ENCODE measurements at regions of chr12 and their contacts with region 1.

Region 1: DNA sequence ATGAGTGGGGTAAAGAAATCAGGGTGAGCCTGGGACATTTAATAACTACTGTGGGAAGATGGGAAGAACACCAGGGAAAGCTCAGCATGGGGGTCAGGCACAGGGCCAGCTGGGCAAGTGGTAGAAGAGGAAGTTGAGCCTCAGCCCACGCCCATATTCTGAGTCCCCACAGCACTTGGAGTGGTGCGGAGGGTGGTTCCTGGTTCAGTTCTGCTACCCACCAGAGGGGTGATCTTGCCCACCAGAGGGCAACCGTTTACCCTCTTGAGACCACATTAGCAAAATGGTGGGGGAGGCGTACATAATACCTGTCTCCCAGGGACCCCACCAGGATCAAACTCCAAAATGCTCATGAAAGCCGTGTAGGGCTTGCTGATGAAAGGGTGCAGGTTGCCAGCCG is 16.8 kb upstream of the ANKRD33 start:
- DNase-seq: no peak
- H3K4me3 ChIP-seq: no peak overlapping the region
- H3K27ac ChIP-seq: no peak overlapping the region
- H3K4me1 ChIP-seq: peaks cover 6% of the 10 kb centered on the region
- H3K27me3 ChIP-seq: no peaks in the 10 kb centered on the region
- CTCF ChIP-seq: no peak
- POLR2A ChIP-seq: no peak

Region 2: DNA sequence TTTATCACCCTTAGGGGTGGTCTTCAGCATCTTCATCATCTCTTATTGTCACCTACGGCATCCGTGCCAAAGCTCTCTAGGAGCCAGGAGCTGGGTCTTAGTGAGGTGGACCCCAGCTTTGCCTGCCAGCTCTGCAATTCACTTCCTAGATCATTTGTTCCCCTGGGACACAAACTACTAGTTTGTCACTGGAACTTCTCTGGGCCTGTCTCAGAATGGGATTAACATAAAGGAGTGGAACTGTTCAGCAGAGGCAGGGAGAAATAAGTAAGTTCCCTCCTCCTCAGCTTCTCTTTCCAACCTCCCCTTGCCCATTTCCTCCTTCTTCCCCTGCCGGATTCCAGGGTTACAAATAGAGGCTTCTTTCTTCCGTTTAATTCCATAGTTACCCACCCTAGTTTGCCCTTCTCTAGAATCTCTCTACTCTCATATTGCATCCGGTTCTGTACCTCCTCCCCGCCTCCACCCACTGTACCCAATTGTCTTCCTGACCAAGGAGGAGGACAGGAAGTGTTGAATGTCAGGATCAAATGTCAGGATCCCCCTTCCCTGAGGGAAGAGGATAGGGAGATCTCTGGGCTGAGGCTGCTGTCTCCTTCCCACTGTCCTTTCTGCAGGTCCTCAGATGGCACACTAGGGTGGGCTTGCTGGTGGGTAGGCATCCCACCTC is 1445.4 kb before region 1 on chr12:
- CTCF ChIA-PET with region 1: no interaction called
- POLR2A ChIA-PET with region 1: no interaction called
- dilution Hi-C with region 1: no loop called
- intact Hi-C with region 1: no loop called
- DNase-seq: peak; percentile 5
- H3K4me3 ChIP-seq: no peak overlapping the region
- H3K27ac ChIP-seq: no peak overlapping the region
- H3K4me1 ChIP-seq: peaks cover 13% of the 10 kb centered on the region
- H3K27me3 ChIP-seq: no peaks in the 10 kb centered on the region
- CTCF ChIP-seq: no peak
- POLR2A ChIP-seq: no peak

Region 3: GRCh38 chr12:51424662-51425438 is 446.3 kb before region 1 on chr12 and contains the start of gene SLC4A8:
- CTCF ChIA-PET with region 1: interaction called, 59 read pairs
- POLR2A ChIA-PET with region 1: no interaction called
- dilution Hi-C with region 1: no loop called
- intact Hi-C with region 1: loop called (anchors 1 kb)
- DNase-seq: peak; percentile 78
- H3K4me3 ChIP-seq: peak within 1 kb of the TSS; percentile 21 to 59 (median 33)
- H3K27ac ChIP-seq: no peak within 1 kb of the TSS
- H3K4me1 ChIP-seq: peaks cover 7% of the 10 kb centered on the region
- H3K27me3 ChIP-seq: no peaks in the 10 kb centered on the region
- CTCF ChIP-seq: peak; percentile 86 to 91
- POLR2A ChIP-seq: peak; percentile 37
- total RNA-seq, gene SLC4A8: 7.1 and 9.7 TPM in 2 replicates

Region 4: GRCh38 chr12:51683726-51684357 is 187.3 kb before region 1 on chr12:
- CTCF ChIA-PET with region 1: interaction called, 5 read pairs
- POLR2A ChIA-PET with region 1: no interaction called
- dilution Hi-C with region 1: no loop called
- intact Hi-C with region 1: loop called (anchors 10 kb)
- DNase-seq: peak; percentile 91
- H3K4me3 ChIP-seq: peak overlapping the region in 1 of 3 experiments; percentile 13
- H3K27ac ChIP-seq: peak overlapping the region; percentile 55
- H3K4me1 ChIP-seq: peaks cover 46% of the 10 kb centered on the region
- H3K27me3 ChIP-seq: no peaks in the 10 kb centered on the region
- CTCF ChIP-seq: no peak
- POLR2A ChIP-seq: no peak

Region 5: DNA sequence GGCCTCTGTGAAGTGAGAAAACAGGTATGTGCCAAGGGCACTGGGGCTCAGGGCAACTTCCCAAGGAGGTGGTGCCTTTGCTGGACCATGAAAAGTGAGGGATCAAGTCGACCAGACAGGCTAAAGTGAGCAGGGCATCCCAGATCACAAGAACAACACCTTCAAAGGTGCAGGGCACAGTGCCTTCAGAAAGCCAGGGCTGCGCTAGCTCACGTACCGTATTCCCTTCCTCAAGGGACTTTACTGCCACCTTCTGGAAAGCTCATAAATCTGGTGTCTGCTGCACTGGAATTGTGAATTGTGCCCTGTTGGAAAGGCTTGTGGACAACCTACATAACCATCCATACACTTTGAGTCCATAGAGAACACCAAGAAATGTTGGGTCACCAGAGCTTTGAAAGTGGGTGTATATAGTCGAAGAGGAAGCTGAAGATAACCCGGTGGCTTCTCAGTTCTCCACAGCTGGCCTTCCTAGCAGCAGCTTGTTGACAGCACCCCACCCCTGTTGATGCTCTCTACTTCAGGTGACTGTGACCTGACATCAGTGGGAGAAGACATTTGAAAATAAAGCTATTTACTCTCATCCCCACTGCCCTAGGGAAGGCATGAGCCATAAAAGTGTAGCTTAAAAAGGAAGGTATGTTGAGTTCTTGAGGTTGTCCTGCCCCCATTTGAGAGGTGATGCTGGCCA is 47.1 kb before region 1 on chr12:
- CTCF ChIA-PET with region 1: interaction called, 105 read pairs
- POLR2A ChIA-PET with region 1: no interaction called
- dilution Hi-C with region 1: no loop called
- intact Hi-C with region 1: loop called (anchors 1 kb)
- DNase-seq: peak; percentile 55
- H3K4me3 ChIP-seq: no peak overlapping the region
- H3K27ac ChIP-seq: no peak overlapping the region
- H3K4me1 ChIP-seq: peaks cover 3% of the 10 kb centered on the region
- H3K27me3 ChIP-seq: no peaks in the 10 kb centered on the region
- CTCF ChIP-seq: peak; percentile 60 to 68
- POLR2A ChIP-seq: no peak

Region 6: GRCh38 chr12:51847643-51848325 is 23.3 kb before region 1 on chr12:
- CTCF ChIA-PET with region 1: interaction called, 34 read pairs
- POLR2A ChIA-PET with region 1: no interaction called
- dilution Hi-C with region 1: no loop called
- intact Hi-C with region 1: no loop called
- DNase-seq: peak; percentile 35
- H3K4me3 ChIP-seq: peak overlapping the region; percentile 62 to 84 (median 73)
- H3K27ac ChIP-seq: no peak overlapping the region
- H3K4me1 ChIP-seq: peaks cover 9% of the 10 kb centered on the region
- H3K27me3 ChIP-seq: peaks cover 4 to 7% of the 10 kb centered on the region in 2 experiments
- CTCF ChIP-seq: no peak
- POLR2A ChIP-seq: no peak